ENCODE measurements at regions of chr19 and their contacts with region 1.

Region 1: DNA sequence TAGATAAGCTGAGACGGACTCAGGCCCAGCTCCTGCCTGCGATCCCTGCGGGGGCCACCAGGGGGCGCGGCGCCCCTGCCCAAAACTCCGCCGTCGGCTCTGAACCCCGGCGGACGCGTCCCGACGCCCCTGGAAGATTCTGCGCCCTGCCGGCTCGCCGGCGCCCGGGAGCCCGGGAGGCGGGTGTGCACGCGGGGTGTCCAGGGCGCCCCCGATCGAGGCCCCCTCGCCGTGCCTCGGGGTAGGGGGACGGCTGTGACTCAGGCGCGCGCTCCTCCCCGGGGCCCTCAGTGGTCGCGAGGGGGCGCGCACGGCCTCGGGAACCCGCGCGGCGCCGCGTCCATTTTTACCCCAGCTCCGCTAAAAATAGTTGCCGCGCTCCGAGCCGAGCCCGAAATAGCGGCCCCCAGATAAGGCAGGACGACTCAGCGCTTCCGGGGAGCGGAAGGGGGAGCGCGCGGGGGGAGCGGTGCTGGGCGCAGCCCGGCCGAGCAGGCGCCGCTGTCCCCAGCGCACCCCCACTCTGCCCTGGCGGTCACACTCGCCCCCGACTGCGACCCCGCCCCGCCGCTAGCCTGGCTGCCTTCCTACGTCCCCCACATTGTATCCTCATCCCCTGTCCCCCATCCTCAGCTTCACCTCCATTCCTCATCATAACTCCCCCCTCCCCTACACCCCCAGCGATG is 16.0 kb upstream of the ERCC1 start:
- DNase-seq: peak; percentile 93
- H3K4me3 ChIP-seq: peak overlapping the region; percentile 57 to 73
- H3K27ac ChIP-seq: peak overlapping the region in 1 of 2 experiments; percentile 83; a peak in 3 of 4 replicates
- H3K4me1 ChIP-seq: peaks cover 5 to 14% of the 10 kb centered on the region in 2 experiments; a peak in 1 of 4 replicates
- H3K27me3 ChIP-seq: no peaks in the 10 kb centered on the region
- CTCF ChIP-seq: peak; percentile 99
- EP300 ChIP-seq: 0 out of 4 replicates have a peak, but pooled peaks of 1 of the 2 experiments have one; percentile 13
- RAD21 ChIP-seq: peak; percentile 74

Region 2: DNA sequence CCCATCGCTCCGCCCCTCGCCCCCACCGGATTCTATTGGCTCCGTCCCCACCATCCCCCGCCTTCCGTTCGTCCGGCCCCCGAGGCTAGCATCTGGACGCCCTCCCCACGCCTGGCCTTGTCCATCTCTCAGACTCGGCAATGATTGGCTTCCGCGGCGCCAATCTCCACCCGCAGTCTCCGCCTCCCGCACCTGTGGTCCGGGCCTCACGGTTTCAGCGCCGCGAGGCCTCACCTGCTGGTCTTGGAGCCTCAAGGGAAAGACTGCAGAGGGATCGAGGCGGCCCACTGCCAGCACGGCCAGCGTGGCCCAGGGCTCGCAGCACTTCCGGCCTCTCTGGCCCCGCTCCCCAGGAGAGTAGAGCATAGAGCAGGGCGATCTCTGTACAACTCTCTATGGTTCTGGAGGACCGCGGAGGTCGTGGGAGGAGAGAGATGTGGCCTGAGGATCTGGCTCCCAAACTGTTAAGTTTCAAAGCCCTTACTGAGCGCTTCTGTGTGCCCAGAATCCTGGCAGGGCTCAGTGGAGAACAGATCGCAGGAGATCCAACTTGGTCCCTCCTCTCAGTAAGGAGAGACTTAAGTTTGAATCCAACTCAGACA is 16.0 kb before region 1 on chr19 and contains the start of gene ERCC1:
- CTCF ChIA-PET with region 1: interaction called, 112 read pairs
- POLR2A ChIA-PET with region 1: no interaction called
- DNase-seq: peak; percentile 98
- H3K4me3 ChIP-seq: peak within 1 kb of the TSS; percentile 67 to 85
- H3K27ac ChIP-seq: peak within 1 kb of the TSS; percentile 92 to 100
- H3K4me1 ChIP-seq: peaks cover 15 to 20% of the 10 kb centered on the region in 2 experiments
- H3K27me3 ChIP-seq: no peaks in the 10 kb centered on the region
- CTCF ChIP-seq: no peak
- EP300 ChIP-seq: peak; percentile 21 to 28; a peak in 1 of 4 replicates
- RAD21 ChIP-seq: no peak
- polyA plus RNA-seq, gene ERCC1: 93.1 and 95.3 TPM in 2 replicates

Region 3: GRCh38 chr19:45455707-45456499 is 16.2 kb after region 1 on chr19:
- CTCF ChIA-PET with region 1: interaction called, 870 read pairs
- POLR2A ChIA-PET with region 1: no interaction called
- DNase-seq: peak; percentile 71
- H3K4me3 ChIP-seq: peak overlapping the region in 1 of 2 experiments; percentile 24; a peak in 1 of 4 replicates
- H3K27ac ChIP-seq: peak overlapping the region; percentile 6 to 95; a peak in 3 of 4 replicates
- H3K4me1 ChIP-seq: peaks cover 12 to 17% of the 10 kb centered on the region in 2 experiments; a peak in 2 of 4 replicates
- H3K27me3 ChIP-seq: no peaks in the 10 kb centered on the region
- CTCF ChIP-seq: no peak
- EP300 ChIP-seq: peak in 1 of 2 experiments; percentile 88; a peak in 1 of 4 replicates
- RAD21 ChIP-seq: no peak

Region 4: GRCh38 chr19:45485305-45486077 is 45.8 kb after region 1 on chr19:
- CTCF ChIA-PET with region 1: interaction called, 870 read pairs
- POLR2A ChIA-PET with region 1: interaction called, 9 read pairs
- DNase-seq: peak; percentile 88
- H3K4me3 ChIP-seq: peak overlapping the region; percentile 49 to 64
- H3K27ac ChIP-seq: peak overlapping the region; percentile 27 to 54; a peak in 1 of 4 replicates
- H3K4me1 ChIP-seq: no peaks in the 10 kb centered on the region; a peak in 1 of 4 replicates
- H3K27me3 ChIP-seq: no peaks in the 10 kb centered on the region
- CTCF ChIP-seq: peak; percentile 67
- EP300 ChIP-seq: no peak
- RAD21 ChIP-seq: peak; percentile 62

Region 5: DNA sequence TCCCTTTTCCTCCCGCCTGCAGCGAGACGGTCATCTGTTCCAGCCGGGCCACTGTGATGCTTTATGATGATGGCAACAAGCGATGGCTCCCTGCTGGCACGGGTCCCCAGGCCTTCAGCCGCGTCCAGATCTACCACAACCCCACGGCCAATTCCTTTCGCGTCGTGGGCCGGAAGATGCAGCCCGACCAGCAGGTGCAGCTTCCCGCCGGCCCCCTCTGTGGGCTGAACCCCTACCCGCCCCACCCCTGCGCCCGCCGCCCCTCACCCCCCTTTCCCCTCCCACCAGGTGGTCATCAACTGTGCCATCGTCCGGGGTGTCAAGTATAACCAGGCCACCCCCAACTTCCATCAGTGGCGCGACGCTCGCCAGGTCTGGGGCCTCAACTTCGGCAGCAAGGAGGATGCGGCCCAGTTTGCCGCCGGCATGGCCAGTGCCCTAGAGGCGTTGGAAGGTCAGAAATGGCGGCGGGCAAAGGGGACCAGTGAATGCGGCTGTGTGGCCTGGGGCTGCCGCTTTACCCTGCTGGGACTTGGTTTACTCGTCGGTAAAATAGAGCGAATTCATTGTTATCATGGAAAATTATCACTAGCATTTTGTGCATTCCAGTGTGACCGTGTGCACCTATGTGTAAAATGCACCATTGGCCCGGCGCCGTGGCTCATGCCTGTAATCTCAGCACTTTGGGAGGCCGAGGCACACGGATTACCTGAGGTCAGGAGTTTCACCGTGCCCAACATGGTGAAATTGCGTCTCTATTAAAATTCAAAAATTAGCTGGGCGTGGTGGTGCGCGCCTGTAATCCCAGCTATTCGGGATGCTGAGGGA is 78.1 kb after region 1 on chr19:
- CTCF ChIA-PET with region 1: no interaction called
- POLR2A ChIA-PET with region 1: no interaction called
- DNase-seq: no peak
- H3K4me3 ChIP-seq: no peak overlapping the region
- H3K27ac ChIP-seq: no peak overlapping the region
- H3K4me1 ChIP-seq: no peaks in the 10 kb centered on the region
- H3K27me3 ChIP-seq: no peaks in the 10 kb centered on the region
- CTCF ChIP-seq: no peak
- EP300 ChIP-seq: no peak
- RAD21 ChIP-seq: no peak

Region 6: GRCh38 chr19:45643024-45643926 is 203.6 kb after region 1 on chr19:
- CTCF ChIA-PET with region 1: interaction called, 15 read pairs
- POLR2A ChIA-PET with region 1: no interaction called
- DNase-seq: peak; percentile 94
- H3K4me3 ChIP-seq: peak overlapping the region; percentile 59 to 65
- H3K27ac ChIP-seq: peak overlapping the region in 1 of 2 experiments; percentile 85; a peak in 2 of 4 replicates
- H3K4me1 ChIP-seq: peaks cover 6 to 17% of the 10 kb centered on the region in 2 experiments; a peak in 1 of 4 replicates
- H3K27me3 ChIP-seq: no peaks in the 10 kb centered on the region
- CTCF ChIP-seq: peak; percentile 99
- EP300 ChIP-seq: no peak
- RAD21 ChIP-seq: peak; percentile 97